Activated CD8-positive, alpha-beta memory T cell treated with anti-CD3 and anti-CD28 coated beads, Interleukin-2, amount 10 ng/mL, durations not matched to agents 7 days and 5 days (primary cell): ENCODE measurements at regions of chr18 and their contacts with region 1.

Region 1: GRCh38 chr18:47215554-47216138 is 35.8 kb downstream of the SKOR2 start:
- DNase-seq: no peak
- ATAC-seq: no peak
- H3K4me3 Mint-ChIP-seq: no peak overlapping the region
- H3K27ac Mint-ChIP-seq: no peak overlapping the region
- H3K4me1 Mint-ChIP-seq: no peaks in the 10 kb centered on the region
- H3K27me3 Mint-ChIP-seq: peaks cover 67% of the 10 kb centered on the region

Region 2: DNA sequence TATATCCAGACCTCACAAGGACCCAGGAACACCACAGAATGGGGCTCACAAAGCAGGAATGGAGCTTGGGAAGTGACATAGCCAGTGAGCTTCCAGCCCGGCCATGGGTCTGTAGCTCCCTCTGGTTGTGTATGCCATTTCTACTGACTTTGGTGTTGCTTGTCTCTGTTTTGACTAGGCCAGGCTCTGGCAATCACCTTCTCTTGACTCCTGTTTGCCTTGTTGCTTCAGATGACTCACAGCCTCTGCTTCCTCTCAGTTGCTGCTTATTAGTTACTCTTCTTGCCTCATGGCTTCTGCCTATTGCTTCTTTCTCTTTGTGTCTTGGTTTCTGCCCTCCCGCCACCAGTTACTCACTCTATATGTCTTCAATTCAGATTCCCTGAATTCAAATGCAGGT is 23.7 kb before region 1 on chr18:
- CTCF ChIA-PET with region 1: no interaction called
- DNase-seq: no peak
- ATAC-seq: no peak
- H3K4me3 Mint-ChIP-seq: no peak overlapping the region
- H3K27ac Mint-ChIP-seq: no peak overlapping the region
- H3K4me1 Mint-ChIP-seq: no peaks in the 10 kb centered on the region
- H3K27me3 Mint-ChIP-seq: peaks cover 20% of the 10 kb centered on the region

Region 3: GRCh38 chr18:47204908-47205522 is 10.6 kb before region 1 on chr18:
- CTCF ChIA-PET with region 1: interaction called, 11 read pairs
- DNase-seq: peak; percentile 46
- ATAC-seq: no peak
- H3K4me3 Mint-ChIP-seq: no peak overlapping the region
- H3K27ac Mint-ChIP-seq: no peak overlapping the region
- H3K4me1 Mint-ChIP-seq: no peaks in the 10 kb centered on the region
- H3K27me3 Mint-ChIP-seq: peaks cover 50% of the 10 kb centered on the region

Region 4: DNA sequence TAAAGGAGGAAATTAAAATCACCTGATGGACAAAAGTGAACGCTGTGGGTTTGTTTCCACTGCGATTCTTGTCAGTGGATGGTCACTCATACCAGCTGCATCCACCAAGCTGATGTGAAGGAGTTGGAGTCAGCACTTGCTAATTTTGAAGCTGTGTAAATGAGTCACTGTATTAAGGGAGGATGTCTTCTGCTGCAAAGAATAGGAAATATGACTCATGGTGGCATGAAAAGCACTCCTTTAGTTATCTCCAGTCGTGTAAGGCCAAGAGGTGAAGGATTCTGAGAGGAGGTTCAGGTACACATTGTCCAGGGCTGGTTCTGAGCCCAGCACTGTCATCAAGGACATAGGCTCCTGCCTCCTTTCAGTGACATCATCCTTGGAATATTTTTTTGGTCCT is 107.5 kb after region 1 on chr18:
- CTCF ChIA-PET with region 1: no interaction called
- DNase-seq: no peak
- ATAC-seq: peak; percentile 42
- H3K4me3 Mint-ChIP-seq: no peak overlapping the region
- H3K27ac Mint-ChIP-seq: no peak overlapping the region
- H3K4me1 Mint-ChIP-seq: peaks cover 16% of the 10 kb centered on the region
- H3K27me3 Mint-ChIP-seq: peaks cover 7% of the 10 kb centered on the region

Region 5: DNA sequence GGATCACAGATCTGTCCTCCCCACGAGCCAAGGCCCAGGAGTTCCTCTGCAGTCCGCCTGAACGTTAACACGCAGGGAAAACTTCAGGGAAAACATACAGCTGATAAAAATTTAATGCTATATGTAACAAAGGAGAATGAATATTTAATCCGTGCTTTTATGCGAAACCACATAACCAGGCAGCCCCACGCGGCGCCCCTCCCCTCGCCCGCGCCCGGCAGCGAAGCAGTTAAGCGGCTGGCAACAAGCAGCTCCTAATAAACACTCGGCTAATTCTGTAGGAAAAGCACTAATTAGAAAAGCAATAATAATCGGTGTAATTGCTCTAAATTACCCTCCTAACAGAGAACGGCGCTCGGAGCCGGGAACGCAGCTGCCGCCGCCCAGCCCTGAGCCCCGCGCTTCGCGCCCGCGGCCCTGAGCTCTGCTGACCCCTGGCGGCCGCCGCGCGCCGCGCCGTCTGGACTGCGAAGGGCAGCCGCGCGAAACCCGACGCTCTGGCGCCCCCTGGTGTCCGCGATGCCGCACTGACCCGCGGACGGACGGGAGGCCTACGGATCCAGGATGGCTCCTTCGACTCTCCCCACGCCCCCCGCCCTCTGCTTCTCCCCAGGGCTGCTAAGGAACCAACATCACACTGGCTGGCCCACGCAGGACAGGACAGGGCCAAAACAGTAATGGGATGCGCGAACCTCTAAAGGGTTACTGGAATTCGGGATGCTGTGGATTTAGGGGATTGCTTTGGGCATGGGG is 533.4 kb after region 1 on chr18:
- CTCF ChIA-PET with region 1: interaction called, 23 read pairs
- DNase-seq: peak; percentile 81
- ATAC-seq: peak; percentile 99
- H3K4me3 Mint-ChIP-seq: no peak overlapping the region
- H3K27ac Mint-ChIP-seq: no peak overlapping the region
- H3K4me1 Mint-ChIP-seq: peaks cover 3% of the 10 kb centered on the region
- H3K27me3 Mint-ChIP-seq: peaks cover 7% of the 10 kb centered on the region